ENCODE measurements at regions of chr1 and their contacts with region 1.

Region 1: GRCh38 chr1:41564738-41565475 is 80.4 kb upstream of the EDN2 start:
- DNase-seq: no peak
- ATAC-seq: no peak
- H3K4me3 ChIP-seq: no peak overlapping the region
- H3K27ac ChIP-seq: no peak overlapping the region
- H3K4me1 ChIP-seq: no peaks in the 10 kb centered on the region
- H3K27me3 ChIP-seq: peaks cover 4% of the 10 kb centered on the region; the same call in 1 of the 2 replicates
- CTCF ChIP-seq: no peak

Region 2: GRCh38 chr1:41444246-41444645 is 120.7 kb before region 1 on chr1:
- CTCF ChIA-PET with region 1: no interaction called
- POLR2A ChIA-PET with region 1: no interaction called
- in situ Hi-C with region 1: no loop called
- intact Hi-C with region 1: no loop called
- DNase-seq: no peak
- ATAC-seq: no peak
- H3K4me3 ChIP-seq: no peak overlapping the region
- H3K27ac ChIP-seq: no peak overlapping the region
- H3K4me1 ChIP-seq: no peaks in the 10 kb centered on the region; the same call in 1 of the 2 replicates
- H3K27me3 ChIP-seq: no peaks in the 10 kb centered on the region
- CTCF ChIP-seq: no peak; the same call in 1 of the 2 replicates

Region 3: DNA sequence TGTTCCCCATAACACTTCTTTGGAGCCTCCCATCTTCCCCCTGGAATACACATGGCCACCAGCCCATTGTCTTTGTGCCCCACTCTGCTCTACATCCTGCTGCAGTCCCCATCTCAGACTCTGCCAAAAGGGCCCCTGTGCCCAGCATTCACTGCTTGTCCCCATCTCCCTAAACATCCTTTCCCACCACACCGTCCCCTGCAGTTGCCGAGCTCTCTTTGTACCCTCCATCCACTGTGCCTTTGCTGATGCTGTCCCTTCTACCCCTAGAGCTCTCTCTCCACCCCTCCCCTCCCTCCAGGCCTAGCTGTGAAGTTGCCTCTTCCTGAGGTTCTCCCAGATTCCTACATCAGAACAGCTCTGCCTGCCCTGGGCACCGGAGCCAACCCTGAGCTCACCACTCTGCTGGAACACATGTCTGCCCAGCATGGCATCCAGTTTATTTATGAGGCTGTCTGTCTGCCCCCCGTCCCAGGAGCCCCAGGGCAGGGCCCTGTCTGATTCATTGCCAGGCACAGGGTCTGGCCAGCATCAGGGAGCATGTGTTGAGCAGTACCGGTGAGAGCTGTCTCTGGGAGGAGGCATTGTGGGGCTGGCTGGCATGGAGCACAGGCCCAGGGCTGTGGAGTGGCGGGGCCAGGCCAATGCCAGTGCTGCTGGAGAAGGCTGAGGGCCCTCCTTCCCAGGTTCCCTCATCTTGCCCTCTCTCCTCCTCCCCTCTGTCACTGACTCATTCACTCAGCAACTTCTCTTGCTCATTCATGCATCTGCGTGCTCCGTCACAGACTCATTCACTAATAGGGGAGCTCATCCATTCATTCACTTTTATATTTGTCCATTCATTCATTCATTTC is 109.2 kb before region 1 on chr1:
- CTCF ChIA-PET with region 1: no interaction called
- POLR2A ChIA-PET with region 1: no interaction called
- in situ Hi-C with region 1: no loop called
- intact Hi-C with region 1: no loop called
- DNase-seq: no peak
- ATAC-seq: no peak
- H3K4me3 ChIP-seq: no peak overlapping the region
- H3K27ac ChIP-seq: no peak overlapping the region
- H3K4me1 ChIP-seq: no peaks in the 10 kb centered on the region
- H3K27me3 ChIP-seq: no peaks in the 10 kb centered on the region
- CTCF ChIP-seq: no peak

Region 4: GRCh38 chr1:41520951-41521752 is 43.8 kb before region 1 on chr1:
- CTCF ChIA-PET with region 1: no interaction called
- POLR2A ChIA-PET with region 1: interaction called, 11 read pairs
- in situ Hi-C with region 1: no loop called
- intact Hi-C with region 1: no loop called
- DNase-seq: no peak
- ATAC-seq: no peak
- H3K4me3 ChIP-seq: no peak overlapping the region
- H3K27ac ChIP-seq: no peak overlapping the region
- H3K4me1 ChIP-seq: no peaks in the 10 kb centered on the region
- H3K27me3 ChIP-seq: no peaks in the 10 kb centered on the region
- CTCF ChIP-seq: no peak

Region 5: DNA sequence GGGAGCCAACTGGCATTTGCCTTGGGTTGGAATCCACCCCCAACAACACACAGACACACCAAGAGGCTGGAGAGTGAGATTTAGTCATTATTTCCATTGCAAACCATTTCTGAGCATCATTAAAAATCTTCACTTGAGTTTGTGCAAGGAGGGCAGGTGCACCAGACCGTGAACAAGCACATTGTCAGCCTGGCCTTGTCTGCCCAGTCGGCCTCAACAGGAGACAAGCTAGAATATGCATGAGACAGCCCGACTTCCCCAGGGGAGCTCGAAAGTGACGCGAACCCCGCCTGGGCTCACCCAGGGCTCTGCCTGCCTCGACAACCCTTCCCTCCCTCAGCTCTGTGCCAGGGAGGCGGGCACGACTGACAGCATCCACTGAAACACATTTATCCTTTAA is 572.9 kb after region 1 on chr1:
- CTCF ChIA-PET with region 1: interaction called, 10 read pairs
- POLR2A ChIA-PET with region 1: no interaction called
- in situ Hi-C with region 1: no loop called
- intact Hi-C with region 1: no loop called
- DNase-seq: no peak
- ATAC-seq: no peak
- H3K4me3 ChIP-seq: no peak overlapping the region
- H3K27ac ChIP-seq: no peak overlapping the region
- H3K4me1 ChIP-seq: no peaks in the 10 kb centered on the region
- H3K27me3 ChIP-seq: peaks cover 3% of the 10 kb centered on the region; the same call in 1 of the 2 replicates
- CTCF ChIP-seq: no peak

Measured in Panc1 (cell line).